ENCODE measurements at regions of chr4 and their contacts with region 1.

Region 1: DNA sequence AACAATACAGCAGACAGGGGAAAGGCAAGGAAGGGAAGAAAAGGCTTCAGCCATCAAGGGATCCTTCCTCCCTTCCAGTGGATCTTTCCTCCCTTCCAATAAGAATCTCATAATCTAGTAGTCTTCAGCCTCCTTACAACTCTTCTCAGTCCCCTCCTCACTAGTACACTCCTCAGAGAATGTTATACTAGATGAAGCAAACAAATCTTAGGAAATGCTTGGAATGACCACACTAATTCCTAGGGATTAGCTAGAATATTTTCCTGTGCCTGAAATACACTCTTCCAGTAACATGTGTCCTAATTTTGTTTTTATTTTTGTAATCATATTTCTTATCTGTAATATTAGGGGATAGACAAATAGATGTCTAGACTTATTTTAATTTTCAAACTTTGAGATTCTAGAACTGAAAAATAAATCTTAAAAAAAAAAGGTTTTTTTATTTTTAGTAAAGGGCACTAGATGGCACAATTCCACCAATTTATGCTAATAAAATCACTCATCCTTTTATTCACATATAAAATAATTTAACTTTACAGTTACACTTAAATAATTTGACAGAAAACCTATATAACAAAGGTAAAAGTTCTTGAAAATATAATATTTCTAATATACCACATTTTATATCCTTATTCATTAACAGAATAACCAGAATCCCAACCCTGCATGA is 7.0 kb upstream of the STPG2 start:
- H3K4me3 Mint-ChIP-seq: no peak overlapping the region
- H3K27ac Mint-ChIP-seq: no peak overlapping the region
- H3K4me1 Mint-ChIP-seq: peaks cover 5% of the 10 kb centered on the region
- H3K27me3 Mint-ChIP-seq: peaks cover 1% of the 10 kb centered on the region

Region 2: DNA sequence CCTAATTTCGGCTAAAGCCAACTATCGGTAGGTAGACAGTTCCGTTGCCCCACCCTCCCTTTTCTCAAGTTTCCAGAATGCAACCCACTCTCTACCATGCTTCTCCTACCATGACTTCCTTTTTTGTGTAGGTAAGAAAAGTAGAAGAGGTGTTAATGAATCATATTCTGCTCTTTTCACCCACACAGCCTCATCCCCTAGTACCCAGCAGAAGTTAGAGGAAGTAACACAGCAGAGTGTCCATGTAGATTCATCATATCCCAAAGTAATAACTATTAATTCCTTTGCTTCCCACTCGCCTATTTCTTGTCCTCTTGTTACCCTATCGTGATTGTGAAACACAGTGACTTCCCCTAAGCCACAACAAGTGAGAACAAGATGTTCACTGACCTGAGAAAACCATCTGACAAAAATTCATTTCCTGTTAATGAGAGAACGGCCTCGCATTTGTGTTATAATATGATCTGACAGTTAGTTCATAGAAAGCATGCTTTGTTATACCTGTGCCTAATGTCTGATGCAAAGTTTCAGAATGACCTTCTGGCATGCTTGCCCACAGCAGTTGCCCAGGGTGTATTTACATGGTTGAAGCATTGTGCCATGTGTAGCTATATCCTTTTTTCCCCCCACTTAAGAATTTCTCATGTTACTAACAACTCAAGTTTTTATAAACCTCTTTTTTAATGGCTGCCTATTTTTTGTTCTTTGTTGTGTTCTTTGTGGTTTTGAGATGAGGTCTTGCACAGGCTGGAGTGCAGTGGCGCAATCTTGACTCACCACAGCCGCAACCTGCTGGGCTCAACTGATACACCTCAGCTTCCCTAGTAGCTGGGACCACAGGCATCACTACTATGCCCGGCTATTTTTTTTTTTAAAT is 296.5 kb after region 1 on chr4:
- intact Hi-C with region 1: loop called (anchors 10 kb)
- H3K4me3 Mint-ChIP-seq: no peak overlapping the region
- H3K27ac Mint-ChIP-seq: no peak overlapping the region
- H3K4me1 Mint-ChIP-seq: peaks cover 24% of the 10 kb centered on the region
- H3K27me3 Mint-ChIP-seq: no peaks in the 10 kb centered on the region

Region 3: DNA sequence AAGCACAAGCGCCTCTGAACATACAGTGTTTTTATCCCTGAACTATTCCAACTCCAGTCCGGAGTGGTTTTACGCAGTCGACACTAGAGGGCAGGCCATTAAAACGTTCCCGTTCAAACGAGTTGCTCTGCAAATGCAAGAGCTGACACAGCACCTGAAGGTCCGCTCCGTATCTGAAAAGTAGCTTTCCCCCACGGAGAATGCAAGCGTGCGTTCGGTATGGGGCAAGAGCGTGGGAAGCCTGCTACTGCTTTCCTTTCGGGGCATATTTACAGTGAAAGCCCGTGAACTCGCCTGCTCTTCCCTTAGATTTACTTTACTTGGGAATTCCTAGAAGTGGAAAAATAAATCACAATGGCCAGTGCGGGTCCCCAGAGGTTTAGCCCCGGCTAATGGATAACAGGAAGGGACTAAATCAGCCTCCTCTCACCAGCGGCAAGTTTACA is 317.4 kb after region 1 on chr4:
- intact Hi-C with region 1: loop called (anchors 5 kb)
- H3K4me3 Mint-ChIP-seq: peak overlapping the region; percentile 64
- H3K27ac Mint-ChIP-seq: no peak overlapping the region
- H3K4me1 Mint-ChIP-seq: peaks cover 6% of the 10 kb centered on the region
- H3K27me3 Mint-ChIP-seq: peaks cover 8% of the 10 kb centered on the region

Region 4: GRCh38 chr4:98706200-98706813 is 556.1 kb after region 1 on chr4:
- intact Hi-C with region 1: no loop called
- H3K4me3 Mint-ChIP-seq: no peak overlapping the region
- H3K27ac Mint-ChIP-seq: no peak overlapping the region
- H3K4me1 Mint-ChIP-seq: no peaks in the 10 kb centered on the region
- H3K27me3 Mint-ChIP-seq: no peaks in the 10 kb centered on the region

Region 5: GRCh38 chr4:99405433-99406115 is 1255.3 kb after region 1 on chr4:
- intact Hi-C with region 1: loop called (anchors 2 kb)
- H3K4me3 Mint-ChIP-seq: no peak overlapping the region
- H3K27ac Mint-ChIP-seq: no peak overlapping the region
- H3K4me1 Mint-ChIP-seq: peaks cover 14% of the 10 kb centered on the region
- H3K27me3 Mint-ChIP-seq: no peaks in the 10 kb centered on the region

Measured in dendritic cell treated with granulocyte-macrophage colony-stimulating factor and Interleukin-4, amounts not matched to agents 40 ng/mL and 50 ng/mL, for 4 days (primary cell).